ENCODE measurements at regions of chr7 and their contacts with region 1.

Region 1: DNA sequence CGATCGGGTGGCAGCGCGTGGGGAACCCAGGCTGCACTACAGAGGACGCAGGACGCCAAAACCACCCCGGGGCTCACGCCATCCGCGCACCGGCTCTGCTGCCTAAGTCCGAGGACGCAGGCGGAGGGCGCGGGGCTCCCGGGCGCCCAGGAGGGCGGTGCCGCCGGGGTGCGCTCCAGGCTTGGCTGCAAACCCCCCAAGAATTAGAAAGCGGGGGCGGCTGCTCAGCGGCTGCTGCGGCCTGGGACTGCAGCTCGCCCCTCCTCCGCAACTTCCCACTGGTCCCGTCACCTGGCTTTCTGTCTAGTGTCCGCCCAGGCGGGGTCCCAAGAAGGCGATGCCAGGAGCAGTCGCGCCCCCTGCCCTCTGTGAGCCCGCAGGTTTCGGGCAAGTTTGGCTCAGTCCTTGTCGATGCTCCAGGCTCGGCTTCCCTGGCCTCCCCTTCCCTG is 1.7 kb upstream of the POU6F2 start:
- DNase-seq: peak; percentile 45 to 78
- ATAC-seq: peak; percentile 63
- H3K4me3 ChIP-seq: peak overlapping the region; percentile 76 to 83
- H3K27ac ChIP-seq: peak overlapping the region in 1 of 2 donors; percentile 13
- H3K4me1 ChIP-seq: no peaks in the 10 kb centered on the region
- H3K27me3 ChIP-seq: no peaks in the 10 kb centered on the region

Region 2: GRCh38 chr7:38942431-38943051 is 33.4 kb before region 1 on chr7:
- intact Hi-C with region 1: loop called in 1 of 2 experiments (anchors 5 kb)
- DNase-seq: no peak
- ATAC-seq: no peak
- H3K4me3 ChIP-seq: no peak overlapping the region
- H3K27ac ChIP-seq: peak overlapping the region; percentile 87 to 94
- H3K4me1 ChIP-seq: peaks cover 0 to 10% of the 10 kb centered on the region in 2 donors
- H3K27me3 ChIP-seq: no peaks in the 10 kb centered on the region